ENCODE measurements at regions of chr20 and their contacts with region 1.

Region 1: DNA sequence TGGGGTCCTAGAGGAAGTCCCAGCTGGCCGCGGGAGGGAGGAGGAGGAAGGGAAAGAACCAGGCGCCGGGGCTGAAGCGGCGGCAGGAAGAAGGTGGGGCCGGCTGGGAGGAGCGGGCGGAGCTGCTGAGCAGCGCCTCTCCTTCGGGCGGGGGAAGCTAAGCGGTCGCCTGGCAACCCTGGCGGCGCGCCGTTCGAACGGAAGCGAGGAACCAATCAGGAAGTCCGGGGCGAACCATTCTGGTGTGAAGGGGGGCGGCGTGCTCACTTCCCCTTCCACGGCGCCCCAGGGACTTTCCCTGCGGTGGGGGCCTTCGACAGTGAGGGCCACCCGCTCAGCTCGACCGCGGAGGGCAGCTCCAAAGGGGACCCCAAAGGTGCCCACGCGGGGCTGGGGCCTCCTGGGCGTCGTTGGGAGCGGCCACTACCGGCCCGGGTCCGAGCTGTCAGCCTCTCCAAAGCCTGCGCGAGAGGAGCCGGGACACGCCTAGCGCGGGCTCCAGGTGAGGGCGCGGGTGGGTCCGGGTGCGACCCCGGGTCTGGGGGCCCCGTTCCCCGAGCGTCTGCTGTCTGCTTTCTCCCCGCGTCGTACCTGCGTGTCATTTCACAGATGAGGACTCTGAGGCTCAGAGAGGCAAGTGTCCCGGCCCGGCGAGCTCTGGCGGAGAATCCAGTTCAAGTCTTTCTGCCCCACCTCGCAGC is at the start of gene FAM110A:
- DNase-seq: peak; percentile 97
- H3K4me3 Mint-ChIP-seq: peak within 1 kb of the TSS; percentile 92
- H3K27ac Mint-ChIP-seq: peak within 1 kb of the TSS; percentile 72
- H3K4me1 Mint-ChIP-seq: peaks cover 37% of the 10 kb centered on the region
- H3K27me3 Mint-ChIP-seq: no peaks in the 10 kb centered on the region
- total RNA-seq, gene FAM110A: 18.0 to 20.1 TPM

Region 2: GRCh38 chr20:815914-816606 is 17.5 kb before region 1 on chr20:
- CTCF ChIA-PET with region 1: interaction called, 15 read pairs
- POLR2A ChIA-PET with region 1: no interaction called
- intact Hi-C with region 1: loop called (anchors 1 kb)
- DNase-seq: peak; percentile 76
- H3K4me3 Mint-ChIP-seq: no peak overlapping the region
- H3K27ac Mint-ChIP-seq: no peak overlapping the region
- H3K4me1 Mint-ChIP-seq: no peaks in the 10 kb centered on the region
- H3K27me3 Mint-ChIP-seq: peaks cover 15% of the 10 kb centered on the region

Region 3: DNA sequence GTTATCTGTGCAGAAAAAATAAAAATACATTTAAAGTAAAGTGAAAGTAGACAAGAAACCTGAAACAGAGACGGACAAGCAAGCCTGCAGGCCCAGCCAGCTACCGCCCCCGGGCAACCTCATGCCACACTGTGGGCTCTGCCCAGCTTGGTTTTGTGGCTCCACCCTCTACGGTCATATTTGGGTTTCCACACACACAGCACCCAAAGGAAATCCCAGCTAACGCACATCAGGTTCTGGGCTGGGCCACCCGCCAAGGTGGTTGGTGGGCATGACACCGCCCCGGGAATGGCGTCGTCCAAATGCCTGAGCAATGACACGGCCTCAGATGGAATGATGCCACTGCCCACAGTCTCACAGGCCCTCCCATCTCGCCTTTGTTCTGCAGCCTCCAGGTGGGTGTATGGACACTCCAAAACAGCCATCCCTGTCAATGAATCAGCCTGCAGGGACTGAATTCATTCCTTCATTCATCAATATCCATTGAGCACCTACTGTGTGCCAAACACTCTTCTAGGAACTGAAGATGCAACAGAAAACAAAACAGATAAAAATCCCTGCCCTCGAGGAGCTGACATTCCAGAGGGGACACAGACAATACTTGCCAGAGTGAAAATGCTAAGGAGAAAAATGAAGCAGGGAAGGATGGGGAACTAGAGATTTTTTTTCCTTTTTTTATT is 22.9 kb after region 1 on chr20:
- CTCF ChIA-PET with region 1: interaction called, 5 read pairs
- POLR2A ChIA-PET with region 1: no interaction called
- intact Hi-C with region 1: loop called (anchors 1 kb)
- DNase-seq: peak; percentile 75
- H3K4me3 Mint-ChIP-seq: peak overlapping the region; percentile 12
- H3K27ac Mint-ChIP-seq: no peak overlapping the region
- H3K4me1 Mint-ChIP-seq: peaks cover 57% of the 10 kb centered on the region
- H3K27me3 Mint-ChIP-seq: no peaks in the 10 kb centered on the region

Region 4: GRCh38 chr20:956330-956951 is 122.8 kb after region 1 on chr20:
- CTCF ChIA-PET with region 1: interaction called, 11 read pairs
- POLR2A ChIA-PET with region 1: no interaction called
- intact Hi-C with region 1: no loop called
- DNase-seq: peak; percentile 80
- H3K4me3 Mint-ChIP-seq: no peak overlapping the region
- H3K27ac Mint-ChIP-seq: no peak overlapping the region
- H3K4me1 Mint-ChIP-seq: peaks cover 2% of the 10 kb centered on the region
- H3K27me3 Mint-ChIP-seq: peaks cover 34% of the 10 kb centered on the region

Region 5: DNA sequence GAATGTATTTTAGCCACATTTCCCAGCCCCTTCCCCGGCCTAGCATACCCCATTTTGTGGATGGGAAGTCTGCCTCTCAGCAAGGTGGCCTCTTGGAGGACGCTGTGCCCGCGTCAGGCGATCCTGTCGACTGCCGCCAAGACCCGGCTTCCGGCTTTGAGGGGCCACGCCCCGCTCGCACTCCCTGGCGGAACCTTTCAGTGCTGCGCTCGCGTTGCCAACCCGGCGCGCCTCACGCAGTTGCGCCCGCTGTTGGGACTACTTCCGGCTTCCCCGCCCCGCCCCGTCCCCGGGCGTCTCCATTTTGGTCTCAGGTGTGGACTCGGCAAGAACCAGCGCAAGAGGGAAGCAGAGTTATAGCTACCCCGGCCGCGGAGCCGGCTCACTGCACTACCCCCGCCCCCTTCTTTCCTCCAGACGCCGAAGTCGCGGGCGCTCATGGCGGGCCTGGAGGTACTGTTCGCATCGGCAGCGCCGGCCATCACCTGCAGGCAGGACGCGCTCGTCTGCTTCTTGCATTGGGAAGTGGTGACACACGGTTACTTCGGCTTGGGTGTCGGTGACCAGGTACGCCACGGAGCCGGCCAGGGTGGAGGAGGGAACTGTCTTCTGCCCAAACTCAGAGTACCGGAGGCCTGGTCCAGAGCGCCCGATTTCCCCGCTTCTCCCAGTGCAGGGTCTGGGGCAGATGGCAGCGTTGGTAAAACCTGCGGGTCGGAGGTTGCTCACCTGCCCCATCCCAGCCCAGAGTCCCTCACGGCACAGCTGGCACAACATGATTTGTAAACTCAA is 284.9 kb after region 1 on chr20 and contains the start of gene PSMF1:
- CTCF ChIA-PET with region 1: interaction called, 3 read pairs
- POLR2A ChIA-PET with region 1: no interaction called
- intact Hi-C with region 1: loop called (anchors 1 kb)
- DNase-seq: peak; percentile 97
- H3K4me3 Mint-ChIP-seq: peak within 1 kb of the TSS; percentile 89
- H3K27ac Mint-ChIP-seq: peak within 1 kb of the TSS; percentile 84
- H3K4me1 Mint-ChIP-seq: peaks cover 57% of the 10 kb centered on the region
- H3K27me3 Mint-ChIP-seq: no peaks in the 10 kb centered on the region
- total RNA-seq, gene PSMF1: 140 to 149 TPM